ENCODE measurements at regions of chr22 and their contacts with region 1.

Region 1: GRCh38 chr22:22764085-22764484 is 119.7 kb downstream of the GGTLC2 start:
- DNase-seq: no peak
- H3K4me3 ChIP-seq: no peak overlapping the region
- H3K27ac ChIP-seq: no peak overlapping the region
- H3K4me1 ChIP-seq: peaks cover 11% of the 10 kb centered on the region
- CTCF ChIP-seq: no peak

Region 2: GRCh38 chr22:22487869-22488597 is 276.1 kb before region 1 on chr22:
- CTCF ChIA-PET with region 1: no interaction called
- POLR2A ChIA-PET with region 1: no interaction called
- intact Hi-C with region 1: no loop called
- DNase-seq: no peak
- H3K4me3 ChIP-seq: no peak overlapping the region
- H3K27ac ChIP-seq: no peak overlapping the region
- H3K4me1 ChIP-seq: no peaks in the 10 kb centered on the region
- CTCF ChIP-seq: no peak

Region 3: GRCh38 chr22:22710719-22711531 is 53.2 kb before region 1 on chr22:
- CTCF ChIA-PET with region 1: no interaction called
- POLR2A ChIA-PET with region 1: interaction called, 3 read pairs
- intact Hi-C with region 1: loop called (anchors 1 kb)
- DNase-seq: peak; percentile 69
- H3K4me3 ChIP-seq: no peak overlapping the region
- H3K27ac ChIP-seq: no peak overlapping the region
- H3K4me1 ChIP-seq: peaks cover 64% of the 10 kb centered on the region
- CTCF ChIP-seq: peak; percentile 97

Region 4: DNA sequence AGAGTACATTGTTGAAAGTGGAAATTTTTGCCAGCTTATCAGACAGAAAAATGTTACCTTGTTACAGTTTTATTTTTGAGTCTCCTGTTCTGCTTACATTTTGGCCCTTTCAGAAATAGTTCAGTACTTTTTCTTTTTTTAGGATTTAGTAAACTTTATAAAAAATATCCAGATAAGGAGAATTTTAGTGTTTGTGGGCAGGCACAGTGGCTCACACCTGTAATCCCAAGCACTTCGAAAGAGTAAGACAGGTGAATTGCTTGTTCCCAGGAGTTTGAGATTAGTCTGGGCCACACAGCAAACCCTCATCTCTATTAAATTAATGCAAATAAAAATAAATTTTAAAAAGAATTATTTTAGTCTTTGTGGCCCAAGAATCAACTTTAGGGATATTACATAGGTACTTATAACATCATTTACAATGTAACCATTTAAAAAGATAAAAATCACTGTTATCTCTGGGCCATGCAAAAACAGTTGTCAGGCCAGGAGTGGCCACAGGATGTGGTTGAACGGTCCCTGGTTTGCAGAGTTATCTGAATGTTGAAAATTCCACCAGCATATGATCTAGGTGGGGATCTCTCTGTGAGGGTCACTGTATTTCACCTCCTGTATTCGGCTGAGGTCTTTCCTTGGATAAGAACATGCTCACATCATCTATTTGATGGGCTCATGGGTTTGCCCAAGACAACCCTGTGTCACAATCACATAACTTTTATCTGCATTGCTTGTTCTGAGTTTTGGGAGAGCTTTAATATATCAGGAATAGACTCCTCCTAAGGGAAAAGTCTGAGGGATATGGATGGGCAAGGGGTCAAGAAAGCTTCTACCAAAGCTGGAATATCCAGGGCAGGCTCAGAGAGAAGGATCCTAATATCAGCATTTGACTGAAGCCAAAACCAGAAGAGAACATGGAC is 28.1 kb before region 1 on chr22:
- CTCF ChIA-PET with region 1: no interaction called
- POLR2A ChIA-PET with region 1: no interaction called
- intact Hi-C with region 1: no loop called
- DNase-seq: no peak
- H3K4me3 ChIP-seq: no peak overlapping the region
- H3K27ac ChIP-seq: no peak overlapping the region
- H3K4me1 ChIP-seq: peaks cover 7% of the 10 kb centered on the region
- CTCF ChIP-seq: no peak

Measured in OCI-LY7 (cell line).